Psoas muscle (tissue), 8 donors: ENCODE measurements at regions of chr3 and their contacts with region 1.

Region 1: DNA sequence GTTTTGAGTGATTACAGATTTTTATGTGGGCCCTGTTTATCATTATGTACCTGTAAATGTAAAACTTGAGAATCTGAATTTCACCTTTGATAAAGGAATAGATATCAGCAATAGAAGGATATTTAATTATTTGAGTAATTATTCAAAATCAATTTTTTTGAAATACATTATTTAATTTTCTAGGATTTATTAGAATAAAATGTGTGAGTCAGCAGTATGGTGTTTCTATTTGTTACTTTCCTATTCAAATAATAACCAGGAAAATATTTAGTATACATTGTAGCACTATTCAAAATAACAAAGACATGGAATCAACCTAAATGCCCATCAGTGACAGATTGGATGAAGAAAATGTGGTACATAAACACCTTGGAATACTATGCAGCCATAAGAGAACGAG is 22.1 kb downstream of the CAPN7 start:
- DNase-seq: no peak
- ATAC-seq: no peak
- H3K4me3 ChIP-seq: no peak overlapping the region
- H3K27ac ChIP-seq: no peak overlapping the region
- H3K4me1 ChIP-seq: no peaks in the 10 kb centered on the region
- H3K27me3 ChIP-seq: no peaks in the 10 kb centered on the region
- CTCF ChIP-seq: no peak

Region 2: DNA sequence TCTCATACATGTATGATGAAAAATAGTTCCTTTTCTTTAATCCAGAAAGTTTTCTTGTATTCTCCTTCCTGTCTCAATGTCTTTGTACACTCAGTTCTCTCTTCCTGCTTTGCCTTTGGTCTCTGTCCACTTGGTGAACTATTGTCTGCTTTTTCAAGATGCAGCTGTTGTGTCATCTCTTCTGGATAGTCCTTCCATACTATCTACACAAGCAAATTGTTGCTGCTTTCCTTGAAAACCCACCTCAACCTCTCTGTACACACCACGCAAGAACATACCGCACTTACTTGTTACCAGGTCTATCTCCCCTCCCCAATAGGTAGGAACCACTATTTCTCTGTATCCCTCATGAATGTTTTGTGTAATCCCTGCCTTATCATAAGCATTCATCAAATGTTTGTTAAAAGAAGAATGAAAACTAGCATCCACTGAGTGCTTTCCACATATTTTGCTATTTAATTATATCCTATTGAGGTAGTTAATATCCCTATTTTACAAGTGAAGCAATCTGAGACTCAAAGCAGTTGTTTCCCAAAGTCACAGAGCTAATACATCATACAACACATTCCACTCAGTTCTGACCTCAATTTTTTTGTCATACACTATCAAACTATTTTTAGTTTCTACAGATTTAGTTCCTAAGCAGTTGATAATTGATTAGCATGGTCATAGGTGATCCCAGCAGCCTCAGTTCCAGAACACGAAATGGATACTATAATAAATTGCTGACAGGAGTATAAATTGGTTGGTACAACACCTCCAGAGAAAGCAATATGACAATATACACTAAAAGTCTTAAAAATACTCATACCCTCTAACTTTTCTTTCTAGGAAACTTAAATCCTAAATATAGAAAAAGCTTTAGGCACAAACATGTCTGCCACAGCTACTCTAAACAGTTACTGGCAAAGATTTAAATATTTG is 353.6 kb after region 1 on chr3:
- intact Hi-C with region 1: loop called in 1 of 2 experiments (anchors 5 kb)
- DNase-seq: no peak
- ATAC-seq: no peak
- H3K4me3 ChIP-seq: no peak overlapping the region
- H3K27ac ChIP-seq: no peak overlapping the region
- H3K4me1 ChIP-seq: no peaks in the 10 kb centered on the region
- H3K27me3 ChIP-seq: no peaks in the 10 kb centered on the region
- CTCF ChIP-seq: no peak